Activated CD4-positive, alpha-beta memory T cell treated with anti-CD3 and anti-CD28 coated beads, Interleukin-2, amount 10 ng/mL, durations not matched to agents 7 days and 5 days (primary cell): ENCODE measurements at regions of chr5 and their contacts with region 1.

Region 1: GRCh38 chr5:126499853-126500342 is 76.7 kb downstream of the GRAMD2B start:
- DNase-seq: peak; percentile 20
- H3K4me3 Mint-ChIP-seq: no peak overlapping the region
- H3K27ac Mint-ChIP-seq: no peak overlapping the region
- H3K4me1 Mint-ChIP-seq: peaks cover 5% of the 10 kb centered on the region
- H3K27me3 Mint-ChIP-seq: no peaks in the 10 kb centered on the region

Region 2: DNA sequence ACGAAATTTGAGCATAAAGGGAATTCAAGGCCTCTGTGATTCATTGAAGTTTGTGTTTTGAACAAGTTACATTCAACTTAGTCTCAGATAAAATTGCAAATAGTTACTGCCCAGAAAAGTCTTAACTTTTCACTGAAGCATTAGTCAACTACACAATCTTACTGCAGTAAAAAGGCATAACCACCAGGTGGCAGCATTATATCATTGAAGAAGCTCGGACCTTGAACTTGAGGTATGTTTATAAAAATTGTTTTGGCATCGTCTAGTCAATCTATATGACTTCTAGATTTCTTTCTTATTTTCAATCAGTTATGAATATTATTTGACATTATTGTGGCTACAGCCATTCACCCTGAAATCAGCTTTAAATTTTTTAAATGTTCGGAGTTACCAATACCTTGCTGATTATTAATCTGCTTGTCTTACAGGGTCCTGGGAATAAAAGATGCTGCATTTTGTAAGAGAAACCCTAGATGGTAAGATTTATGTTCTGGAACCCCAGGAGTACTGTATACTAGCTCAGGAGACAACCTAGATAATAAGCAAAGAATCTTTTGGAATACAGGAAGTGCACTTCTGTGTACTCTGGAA is 160.6 kb before region 1 on chr5:
- CTCF ChIA-PET with region 1: interaction called, 32 read pairs
- POLR2A ChIA-PET with region 1: no interaction called
- DNase-seq: peak; percentile 46
- H3K4me3 Mint-ChIP-seq: no peak overlapping the region
- H3K27ac Mint-ChIP-seq: no peak overlapping the region
- H3K4me1 Mint-ChIP-seq: no peaks in the 10 kb centered on the region
- H3K27me3 Mint-ChIP-seq: peaks cover 14% of the 10 kb centered on the region

Region 3: DNA sequence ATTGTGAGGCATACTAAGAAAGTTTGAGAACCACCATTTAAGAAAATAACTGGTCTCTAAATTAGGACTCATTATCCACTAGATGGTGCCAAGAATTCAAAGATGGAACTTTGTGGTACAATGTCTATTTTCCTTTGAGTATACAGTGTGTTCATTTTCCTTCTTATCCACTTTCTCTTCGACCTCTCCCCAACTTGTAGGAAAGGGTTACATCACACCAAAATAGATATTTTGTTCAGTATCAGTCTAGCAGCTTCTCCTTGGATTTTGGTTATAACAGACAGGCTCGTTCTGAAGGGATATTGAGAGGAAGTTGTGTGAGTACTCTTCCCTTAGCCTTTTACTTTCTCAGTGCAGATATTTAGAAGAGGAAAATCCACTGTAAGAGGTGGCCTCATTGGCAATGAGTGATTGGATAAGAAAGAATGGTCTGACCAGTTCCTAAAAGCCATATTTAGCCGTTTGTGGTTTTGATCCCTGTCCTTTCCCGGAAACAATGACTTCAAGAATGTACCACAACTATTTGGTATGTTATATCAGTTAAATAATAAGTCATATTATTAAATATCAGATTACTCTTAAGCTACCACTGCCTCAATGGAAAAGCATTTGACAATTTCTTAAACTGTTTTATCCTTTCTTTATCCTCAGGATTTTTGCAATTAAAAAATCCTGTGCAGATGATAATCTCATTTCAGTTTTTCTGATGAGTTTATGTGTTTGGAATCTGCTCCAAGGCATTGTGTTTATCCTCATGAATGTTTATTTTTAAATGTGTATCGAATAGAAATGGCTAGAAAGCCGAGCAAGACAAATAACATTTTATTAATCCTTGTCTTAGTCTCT is 145.7 kb before region 1 on chr5:
- CTCF ChIA-PET with region 1: interaction called, 38 read pairs
- POLR2A ChIA-PET with region 1: no interaction called
- DNase-seq: no peak
- H3K4me3 Mint-ChIP-seq: no peak overlapping the region
- H3K27ac Mint-ChIP-seq: no peak overlapping the region
- H3K4me1 Mint-ChIP-seq: peaks cover 7% of the 10 kb centered on the region
- H3K27me3 Mint-ChIP-seq: peaks cover 5% of the 10 kb centered on the region

Region 4: DNA sequence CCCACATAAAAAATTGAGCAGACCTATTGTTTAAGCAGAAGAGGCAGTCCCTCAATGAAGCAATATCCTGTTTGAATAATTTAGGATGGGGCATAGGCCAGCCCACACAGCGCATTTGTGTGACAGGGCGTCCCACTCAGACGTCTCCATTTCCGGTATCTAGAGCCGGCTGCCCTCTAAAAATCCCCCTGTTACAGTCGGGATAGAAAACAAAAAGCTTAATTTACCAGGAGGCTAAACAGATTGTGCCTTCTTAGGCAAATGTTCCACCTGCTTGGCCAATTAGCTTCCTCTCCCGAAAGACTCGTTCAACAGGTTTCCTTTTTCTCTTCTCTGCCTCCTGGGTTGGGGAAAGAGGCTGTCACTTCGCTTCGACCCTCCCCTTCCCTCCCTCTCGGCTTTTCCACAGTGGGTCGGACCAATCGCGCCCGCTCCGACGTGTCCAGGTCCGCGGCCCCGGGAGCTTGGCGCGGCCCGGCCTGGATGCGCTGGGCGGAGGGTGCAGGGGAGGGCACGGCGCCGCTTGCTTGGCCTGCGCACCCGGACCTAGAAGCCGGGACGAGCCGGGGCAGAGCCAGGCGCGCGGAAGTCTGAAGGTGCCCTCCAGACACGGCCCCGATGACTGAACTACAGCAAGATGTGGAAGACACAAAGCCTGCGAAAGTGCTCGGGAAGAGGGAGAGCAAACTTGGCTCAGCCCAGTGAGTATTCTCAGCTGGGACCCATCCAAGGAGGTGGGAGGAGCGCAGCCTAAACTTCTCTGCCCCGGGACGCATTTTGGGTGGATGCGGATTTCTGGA is 76.7 kb before region 1 on chr5 and contains the start of gene GRAMD2B:
- CTCF ChIA-PET with region 1: interaction called, 12 read pairs
- POLR2A ChIA-PET with region 1: interaction called, 7 read pairs
- DNase-seq: peak; percentile 74
- H3K4me3 Mint-ChIP-seq: peak within 1 kb of the TSS; percentile 85
- H3K27ac Mint-ChIP-seq: peak within 1 kb of the TSS; percentile 77
- H3K4me1 Mint-ChIP-seq: peaks cover 38% of the 10 kb centered on the region
- H3K27me3 Mint-ChIP-seq: no peaks in the 10 kb centered on the region
- total RNA-seq, gene GRAMD2B: 4.6 to 5.0 TPM

Region 5: DNA sequence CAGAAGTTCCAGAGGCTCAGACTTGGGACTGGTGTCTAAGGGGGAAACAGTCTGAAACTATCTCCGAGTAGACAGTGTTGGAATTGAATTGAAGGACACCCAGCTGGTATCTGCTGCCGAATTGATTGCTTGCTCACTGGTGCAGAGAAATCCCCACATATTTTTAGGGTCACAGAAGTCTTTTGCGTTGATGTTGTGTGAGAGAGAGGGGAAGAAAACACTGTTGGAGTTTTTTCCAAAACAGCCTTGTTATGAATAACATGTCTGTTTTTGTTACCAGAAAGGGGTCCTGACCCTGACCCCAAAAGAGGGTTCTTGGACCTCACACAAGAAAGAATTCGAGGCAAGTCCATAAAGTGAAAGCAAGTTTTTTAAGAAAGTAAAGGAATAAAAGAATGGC is 13.8 kb after region 1 on chr5:
- CTCF ChIA-PET with region 1: interaction called, 11 read pairs
- POLR2A ChIA-PET with region 1: no interaction called
- DNase-seq: no peak
- H3K4me3 Mint-ChIP-seq: no peak overlapping the region
- H3K27ac Mint-ChIP-seq: no peak overlapping the region
- H3K4me1 Mint-ChIP-seq: peaks cover 9% of the 10 kb centered on the region
- H3K27me3 Mint-ChIP-seq: no peaks in the 10 kb centered on the region

Region 6: GRCh38 chr5:126531543-126532120 is 31.7 kb after region 1 on chr5:
- CTCF ChIA-PET with region 1: interaction called, 13 read pairs
- POLR2A ChIA-PET with region 1: no interaction called
- DNase-seq: no peak
- H3K4me3 Mint-ChIP-seq: no peak overlapping the region
- H3K27ac Mint-ChIP-seq: no peak overlapping the region
- H3K4me1 Mint-ChIP-seq: no peaks in the 10 kb centered on the region
- H3K27me3 Mint-ChIP-seq: peaks cover 5% of the 10 kb centered on the region

Region 7: GRCh38 chr5:126536874-126537273 is 37.0 kb after region 1 on chr5:
- CTCF ChIA-PET with region 1: interaction called, 13 read pairs
- POLR2A ChIA-PET with region 1: no interaction called
- DNase-seq: no peak
- H3K4me3 Mint-ChIP-seq: no peak overlapping the region
- H3K27ac Mint-ChIP-seq: no peak overlapping the region
- H3K4me1 Mint-ChIP-seq: no peaks in the 10 kb centered on the region
- H3K27me3 Mint-ChIP-seq: no peaks in the 10 kb centered on the region

Region 8: GRCh38 chr5:126615286-126615685 is 115.4 kb after region 1 on chr5:
- CTCF ChIA-PET with region 1: no interaction called
- POLR2A ChIA-PET with region 1: no interaction called
- DNase-seq: no peak
- H3K4me3 Mint-ChIP-seq: no peak overlapping the region
- H3K27ac Mint-ChIP-seq: no peak overlapping the region
- H3K4me1 Mint-ChIP-seq: peaks cover 10% of the 10 kb centered on the region
- H3K27me3 Mint-ChIP-seq: no peaks in the 10 kb centered on the region